ENCODE measurements at regions of chr19 and their contacts with region 1.

Region 1: GRCh38 chr19:45485305-45486077 is 11.4 kb downstream of the RTN2 start:
- DNase-seq: peak; percentile 99
- H3K4me3 Mint-ChIP-seq: peak overlapping the region; percentile 81
- H3K27ac Mint-ChIP-seq: peak overlapping the region; percentile 46
- H3K4me1 Mint-ChIP-seq: peaks cover 4% of the 10 kb centered on the region
- H3K27me3 Mint-ChIP-seq: no peaks in the 10 kb centered on the region

Region 2: DNA sequence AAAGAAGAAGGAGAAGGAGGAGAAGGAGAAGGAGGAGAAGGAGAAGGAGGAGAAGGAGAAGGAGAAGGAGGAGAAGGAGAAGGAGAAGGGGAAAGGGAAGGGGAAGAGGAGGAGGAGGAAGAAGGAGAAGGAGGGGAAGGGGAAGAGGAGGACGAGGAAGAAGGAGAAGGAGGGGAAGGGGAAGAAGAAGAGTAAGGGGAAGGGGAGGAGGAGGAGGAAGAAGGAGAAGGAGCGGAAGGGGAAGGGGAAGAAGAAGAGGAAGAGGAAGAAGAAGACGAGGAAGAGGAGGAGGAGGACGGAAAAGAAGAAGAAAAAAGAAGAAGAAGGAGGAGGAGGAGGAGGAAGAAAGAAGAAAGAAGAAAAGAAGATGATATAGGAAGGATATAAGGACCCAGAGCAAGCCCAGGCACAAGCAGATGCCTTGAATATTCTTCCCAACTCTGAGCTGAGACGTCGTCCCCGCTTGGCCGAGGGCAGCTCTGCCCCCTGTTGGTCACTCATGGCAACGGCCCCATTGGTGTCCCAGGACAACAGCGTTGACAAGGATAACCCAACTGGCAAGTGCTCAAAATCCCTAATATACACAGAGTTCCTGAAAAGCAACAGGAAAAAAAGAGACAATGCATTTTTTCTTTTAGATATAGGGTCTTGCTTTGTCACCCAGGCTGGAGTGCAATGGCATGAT is 902.8 kb before region 1 on chr19:
- CTCF ChIA-PET with region 1: no interaction called
- intact Hi-C with region 1: no loop called
- DNase-seq: peak; percentile 54
- H3K4me3 Mint-ChIP-seq: no peak overlapping the region
- H3K27ac Mint-ChIP-seq: no peak overlapping the region
- H3K4me1 Mint-ChIP-seq: peaks cover 8% of the 10 kb centered on the region
- H3K27me3 Mint-ChIP-seq: peaks cover 5% of the 10 kb centered on the region

Region 3: GRCh38 chr19:45346449-45346848 is 139.0 kb before region 1 on chr19:
- CTCF ChIA-PET with region 1: no interaction called
- intact Hi-C with region 1: no loop called
- DNase-seq: no peak
- H3K4me3 Mint-ChIP-seq: no peak overlapping the region
- H3K27ac Mint-ChIP-seq: no peak overlapping the region
- H3K4me1 Mint-ChIP-seq: no peaks in the 10 kb centered on the region
- H3K27me3 Mint-ChIP-seq: peaks cover 18% of the 10 kb centered on the region

Region 4: GRCh38 chr19:45423589-45424190 is 61.8 kb before region 1 on chr19 and contains the start of gene ERCC1:
- CTCF ChIA-PET with region 1: interaction called, 12 read pairs
- intact Hi-C with region 1: loop called (anchors 1 kb)
- DNase-seq: peak; percentile 90
- H3K4me3 Mint-ChIP-seq: peak within 1 kb of the TSS; percentile 94
- H3K27ac Mint-ChIP-seq: peak within 1 kb of the TSS; percentile 90
- H3K4me1 Mint-ChIP-seq: peaks cover 63% of the 10 kb centered on the region
- H3K27me3 Mint-ChIP-seq: peaks cover 3% of the 10 kb centered on the region
- total RNA-seq, gene ERCC1: 28.9 to 30.7 TPM

Region 5: DNA sequence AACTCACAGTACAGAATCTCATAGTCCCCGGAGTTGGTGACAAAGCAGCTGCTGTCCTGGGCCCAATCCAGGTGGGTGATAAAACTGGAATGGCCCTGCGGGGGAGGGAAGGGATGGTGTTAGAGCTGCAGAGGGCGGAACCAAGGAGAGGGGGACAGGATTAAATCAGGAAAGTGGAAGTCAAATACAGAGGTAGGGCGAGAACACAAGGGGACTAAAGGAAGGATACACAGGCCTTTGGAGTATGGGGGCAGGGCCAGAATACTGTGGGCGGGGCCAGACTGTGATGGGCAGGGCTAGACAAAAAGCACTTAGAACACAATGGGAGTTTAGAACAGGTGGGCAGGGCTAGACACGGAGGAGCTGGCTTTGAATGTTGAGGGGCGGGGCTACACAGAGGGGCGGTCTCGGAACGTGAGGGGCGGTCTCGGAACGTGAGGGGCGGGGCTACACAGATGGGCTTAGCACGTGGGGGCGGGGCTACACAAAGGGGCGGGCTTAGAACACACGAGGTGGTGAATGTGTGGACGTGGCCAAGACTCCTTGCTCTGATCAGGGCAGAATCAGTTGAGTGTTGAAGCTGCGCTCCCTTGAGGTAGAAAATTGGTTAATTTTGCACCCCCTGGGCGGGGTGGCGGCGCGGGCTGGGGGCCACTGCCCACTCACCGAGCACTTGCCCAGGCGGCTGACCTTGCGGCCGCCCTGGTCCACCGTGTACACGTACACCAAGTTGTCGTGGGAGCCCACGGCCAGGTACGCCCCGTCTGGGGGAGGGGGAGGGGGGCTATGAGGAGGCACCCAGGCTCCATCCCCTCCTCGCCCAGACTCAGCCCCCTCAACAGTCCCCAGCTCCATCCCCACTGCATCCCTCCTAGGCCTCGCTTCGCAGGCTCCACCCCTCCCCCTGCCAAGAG is 130.6 kb after region 1 on chr19:
- CTCF ChIA-PET with region 1: no interaction called
- intact Hi-C with region 1: no loop called
- DNase-seq: peak; percentile 85
- H3K4me3 Mint-ChIP-seq: no peak overlapping the region
- H3K27ac Mint-ChIP-seq: peak overlapping the region; percentile 39
- H3K4me1 Mint-ChIP-seq: peaks cover 23% of the 10 kb centered on the region
- H3K27me3 Mint-ChIP-seq: no peaks in the 10 kb centered on the region

Region 6: DNA sequence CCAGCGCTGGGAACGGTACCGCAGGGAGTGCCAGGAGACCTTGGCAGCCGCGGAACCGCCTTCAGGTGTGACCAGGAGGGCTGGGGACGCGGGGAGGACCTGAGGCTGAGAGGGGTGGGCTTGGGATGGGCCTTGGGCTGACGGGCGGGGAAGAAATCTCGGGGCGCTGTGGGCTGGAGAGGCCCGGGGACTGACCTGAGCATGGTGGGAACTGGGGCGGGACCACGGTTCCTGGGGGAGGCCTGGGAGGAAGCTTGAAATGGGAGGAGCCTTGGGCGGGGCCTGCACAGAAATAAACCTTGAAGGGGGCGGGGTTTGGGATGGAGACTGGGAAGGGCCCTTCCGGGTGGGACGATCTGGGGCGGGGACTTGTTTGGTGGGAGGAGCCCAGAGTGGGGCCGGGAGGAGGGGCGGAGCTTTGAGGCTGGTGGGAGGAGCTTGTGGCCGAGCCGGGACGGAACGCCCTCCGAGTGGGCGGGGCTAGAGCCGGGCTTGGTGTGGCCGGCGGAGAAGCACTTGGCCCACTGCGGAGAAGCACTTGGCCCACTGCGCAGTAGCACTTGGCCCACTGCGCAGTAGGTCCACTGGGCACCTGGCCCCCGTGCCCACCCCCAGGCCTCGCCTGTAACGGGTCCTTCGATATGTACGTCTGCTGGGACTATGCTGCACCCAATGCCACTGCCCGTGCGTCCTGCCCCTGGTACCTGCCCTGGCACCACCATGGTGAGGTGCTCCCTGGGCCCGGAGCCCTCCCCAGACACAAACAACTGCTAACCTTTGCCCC is 185.4 kb after region 1 on chr19:
- CTCF ChIA-PET with region 1: no interaction called
- intact Hi-C with region 1: no loop called
- DNase-seq: peak; percentile 78
- H3K4me3 Mint-ChIP-seq: peak overlapping the region; percentile 41
- H3K27ac Mint-ChIP-seq: no peak overlapping the region
- H3K4me1 Mint-ChIP-seq: peaks cover 36% of the 10 kb centered on the region
- H3K27me3 Mint-ChIP-seq: peaks cover 20% of the 10 kb centered on the region

Measured in activated naive CD4-positive, alpha-beta T cell treated with anti-CD3 and anti-CD28 coated beads for 36 hours (primary cell).